ENCODE measurements at regions of chr5 and their contacts with region 1.

Region 1: GRCh38 chr5:126339215-126339805 is 83.9 kb upstream of the GRAMD2B start:
- DNase-seq: peak; percentile 73
- H3K4me3 Mint-ChIP-seq: no peak overlapping the region
- H3K27ac Mint-ChIP-seq: no peak overlapping the region
- H3K4me1 Mint-ChIP-seq: no peaks in the 10 kb centered on the region
- H3K27me3 Mint-ChIP-seq: peaks cover 14% of the 10 kb centered on the region

Region 2: DNA sequence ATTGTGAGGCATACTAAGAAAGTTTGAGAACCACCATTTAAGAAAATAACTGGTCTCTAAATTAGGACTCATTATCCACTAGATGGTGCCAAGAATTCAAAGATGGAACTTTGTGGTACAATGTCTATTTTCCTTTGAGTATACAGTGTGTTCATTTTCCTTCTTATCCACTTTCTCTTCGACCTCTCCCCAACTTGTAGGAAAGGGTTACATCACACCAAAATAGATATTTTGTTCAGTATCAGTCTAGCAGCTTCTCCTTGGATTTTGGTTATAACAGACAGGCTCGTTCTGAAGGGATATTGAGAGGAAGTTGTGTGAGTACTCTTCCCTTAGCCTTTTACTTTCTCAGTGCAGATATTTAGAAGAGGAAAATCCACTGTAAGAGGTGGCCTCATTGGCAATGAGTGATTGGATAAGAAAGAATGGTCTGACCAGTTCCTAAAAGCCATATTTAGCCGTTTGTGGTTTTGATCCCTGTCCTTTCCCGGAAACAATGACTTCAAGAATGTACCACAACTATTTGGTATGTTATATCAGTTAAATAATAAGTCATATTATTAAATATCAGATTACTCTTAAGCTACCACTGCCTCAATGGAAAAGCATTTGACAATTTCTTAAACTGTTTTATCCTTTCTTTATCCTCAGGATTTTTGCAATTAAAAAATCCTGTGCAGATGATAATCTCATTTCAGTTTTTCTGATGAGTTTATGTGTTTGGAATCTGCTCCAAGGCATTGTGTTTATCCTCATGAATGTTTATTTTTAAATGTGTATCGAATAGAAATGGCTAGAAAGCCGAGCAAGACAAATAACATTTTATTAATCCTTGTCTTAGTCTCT is 14.9 kb after region 1 on chr5:
- CTCF ChIA-PET with region 1: interaction called, 26 read pairs
- intact Hi-C with region 1: loop called (anchors 1 kb)
- DNase-seq: no peak
- H3K4me3 Mint-ChIP-seq: peak overlapping the region; percentile 33
- H3K27ac Mint-ChIP-seq: no peak overlapping the region
- H3K4me1 Mint-ChIP-seq: peaks cover 12% of the 10 kb centered on the region
- H3K27me3 Mint-ChIP-seq: no peaks in the 10 kb centered on the region

Region 3: GRCh38 chr5:126536874-126537273 is 197.6 kb after region 1 on chr5:
- CTCF ChIA-PET with region 1: interaction called, 66 read pairs
- intact Hi-C with region 1: loop called (anchors 1 kb)
- DNase-seq: no peak
- H3K4me3 Mint-ChIP-seq: no peak overlapping the region
- H3K27ac Mint-ChIP-seq: no peak overlapping the region
- H3K4me1 Mint-ChIP-seq: no peaks in the 10 kb centered on the region
- H3K27me3 Mint-ChIP-seq: no peaks in the 10 kb centered on the region

Region 4: DNA sequence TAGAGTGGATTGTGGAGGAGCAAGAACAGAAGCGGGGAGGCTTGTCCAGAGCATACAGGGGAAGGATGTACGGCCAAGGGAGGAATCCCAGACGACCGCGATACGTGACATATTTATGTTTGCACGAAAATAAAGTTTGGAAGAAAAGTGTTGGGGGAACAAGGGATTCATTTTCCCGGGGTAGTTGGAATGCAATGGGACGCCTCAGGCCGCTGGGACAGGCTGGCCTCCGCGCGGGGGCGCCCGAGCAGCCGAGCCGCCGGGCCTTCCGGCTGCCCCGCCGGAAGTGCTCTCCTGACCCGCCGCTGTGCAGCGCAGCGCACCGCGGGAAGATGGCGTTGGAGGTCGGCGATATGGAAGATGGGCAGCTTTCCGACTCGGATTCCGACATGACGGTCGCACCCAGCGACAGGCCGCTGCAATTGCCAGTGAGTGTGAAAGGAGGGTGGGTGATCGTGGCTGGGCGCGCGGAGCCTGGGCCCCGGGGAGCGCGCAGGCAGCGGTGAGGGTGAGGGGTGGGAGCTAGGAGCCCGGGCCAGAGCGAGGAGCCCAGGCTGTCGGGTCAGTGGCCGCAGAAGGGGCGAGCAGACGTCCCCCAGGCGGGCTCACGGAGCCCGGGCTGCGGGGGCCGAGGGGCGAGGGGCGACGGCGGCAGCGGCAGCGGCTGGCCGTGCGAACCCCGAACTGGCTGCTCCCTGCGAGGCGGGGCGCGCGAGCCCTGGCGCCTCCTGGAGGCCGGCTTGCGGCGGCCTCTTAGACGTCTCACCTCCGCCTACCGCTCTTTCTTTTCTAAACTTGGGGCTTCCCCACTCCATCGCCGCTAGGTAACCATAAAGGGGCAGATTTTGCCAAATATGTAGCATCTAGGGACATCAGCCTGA is 261.6 kb after region 1 on chr5 and contains the start of gene PHAX:
- CTCF ChIA-PET with region 1: interaction called, 5 read pairs
- intact Hi-C with region 1: loop called (anchors 1 kb)
- DNase-seq: peak; percentile 78
- H3K4me3 Mint-ChIP-seq: peak within 1 kb of the TSS; percentile 90
- H3K27ac Mint-ChIP-seq: peak within 1 kb of the TSS; percentile 93
- H3K4me1 Mint-ChIP-seq: peaks cover 34% of the 10 kb centered on the region
- H3K27me3 Mint-ChIP-seq: no peaks in the 10 kb centered on the region
- total RNA-seq, gene PHAX: 34.9 to 37.2 TPM

Region 5: DNA sequence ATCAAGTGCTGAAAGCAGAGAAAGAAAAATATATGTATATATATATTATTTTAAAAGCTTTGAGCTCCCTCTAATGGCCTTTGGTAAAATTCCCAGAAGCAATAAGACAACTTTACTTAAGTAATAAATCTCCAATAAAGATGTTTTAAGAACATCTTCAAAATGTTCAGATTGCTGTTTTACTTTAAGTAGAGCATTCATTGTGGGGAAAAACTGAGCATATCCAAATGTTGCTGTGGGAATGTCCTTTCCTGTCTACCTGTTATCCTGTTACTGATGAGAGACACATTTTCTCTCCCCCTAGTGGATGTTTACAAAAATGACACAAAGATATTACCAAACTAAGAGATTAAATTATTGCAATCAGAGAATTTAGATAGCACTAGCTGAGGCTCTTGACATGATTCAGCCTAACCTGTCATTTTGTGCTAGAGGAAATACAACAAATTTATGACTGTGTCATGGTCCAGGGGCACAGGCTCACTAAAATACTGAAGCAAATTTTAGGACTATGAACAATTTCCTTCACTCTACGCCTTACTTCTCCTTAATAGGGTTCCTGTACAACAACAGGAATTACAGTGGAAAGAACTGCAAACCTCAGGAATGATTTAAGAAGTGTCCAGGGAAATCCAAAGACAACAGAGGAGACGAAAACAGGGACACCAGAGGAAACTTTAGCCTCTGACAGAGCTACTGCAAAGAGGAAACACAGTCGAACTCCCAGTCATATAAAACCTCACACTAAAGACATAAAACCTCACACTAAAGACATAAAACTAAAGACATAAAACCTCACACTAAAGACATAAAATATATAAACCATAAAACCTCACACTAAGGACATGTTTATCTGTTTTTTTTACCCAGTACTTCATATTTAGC is 1153.8 kb after region 1 on chr5:
- CTCF ChIA-PET with region 1: no interaction called
- intact Hi-C with region 1: loop called (anchors 10 kb)
- DNase-seq: no peak
- H3K4me3 Mint-ChIP-seq: no peak overlapping the region
- H3K27ac Mint-ChIP-seq: no peak overlapping the region
- H3K4me1 Mint-ChIP-seq: no peaks in the 10 kb centered on the region
- H3K27me3 Mint-ChIP-seq: peaks cover 3% of the 10 kb centered on the region

Measured in activated naive CD4-positive, alpha-beta T cell treated with anti-CD3 and anti-CD28 coated beads for 36 hours (primary cell).